Activated naive CD4-positive, alpha-beta T cell treated with anti-CD3 and anti-CD28 coated beads for 36 hours (primary cell): ENCODE measurements at regions of chr14 and their contacts with region 1.

Region 1: GRCh38 chr14:50542941-50543418 is 10.6 kb upstream of the MAP4K5 start:
- DNase-seq: peak; percentile 54
- H3K4me3 Mint-ChIP-seq: no peak overlapping the region
- H3K27ac Mint-ChIP-seq: no peak overlapping the region
- H3K4me1 Mint-ChIP-seq: peaks cover 8% of the 10 kb centered on the region
- H3K27me3 Mint-ChIP-seq: no peaks in the 10 kb centered on the region

Region 2: DNA sequence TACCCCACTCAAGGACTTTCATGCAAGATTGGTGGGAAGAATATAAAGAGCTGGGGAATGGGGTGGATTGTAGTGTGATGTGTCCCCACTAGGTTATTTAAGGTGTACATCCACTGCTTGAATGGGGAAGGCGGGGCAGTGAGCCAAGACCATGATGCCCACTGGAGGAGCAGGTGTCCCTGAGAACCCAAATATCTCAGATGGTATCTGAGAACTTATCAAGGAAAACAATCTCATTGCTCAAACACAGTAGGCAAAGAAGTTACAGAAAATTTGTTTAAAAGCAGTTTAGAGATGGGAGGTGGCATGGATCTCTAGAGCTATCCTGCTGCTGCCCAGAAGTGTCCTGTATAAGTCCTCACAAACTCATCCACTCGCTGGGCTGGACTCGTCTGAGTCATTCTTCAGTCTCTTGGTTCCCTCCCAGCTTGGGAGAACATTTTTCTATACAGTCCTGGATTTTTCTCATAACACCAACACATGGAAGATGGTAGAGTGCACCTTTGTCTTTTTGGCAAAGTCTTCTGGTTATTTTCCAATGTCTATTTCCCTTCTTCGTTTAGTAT is 11.5 kb after region 1 on chr14:
- CTCF ChIA-PET with region 1: interaction called, 10 read pairs
- intact Hi-C with region 1: no loop called
- DNase-seq: no peak
- H3K4me3 Mint-ChIP-seq: no peak overlapping the region
- H3K27ac Mint-ChIP-seq: no peak overlapping the region
- H3K4me1 Mint-ChIP-seq: no peaks in the 10 kb centered on the region
- H3K27me3 Mint-ChIP-seq: peaks cover 49% of the 10 kb centered on the region